ENCODE measurements at regions of chr6 and their contacts with region 1.

Region 1: GRCh38 chr6:33711140-33712129 is at the start of gene UQCC2:
- DNase-seq: peak; percentile 96 to 100
- ATAC-seq: peak; percentile 96 to 97 (median 97)
- H3K4me3 ChIP-seq: peak within 1 kb of the TSS; percentile 99
- H3K4me3 Mint-ChIP-seq: peak within 1 kb of the TSS; percentile 98
- H3K27ac ChIP-seq: peak within 1 kb of the TSS; percentile 94
- H3K27ac Mint-ChIP-seq: peak within 1 kb of the TSS; percentile 95 to 100
- H3K4me1 ChIP-seq: peaks cover 18% of the 10 kb centered on the region
- H3K4me1 Mint-ChIP-seq: peaks cover 21 to 22% of the 10 kb centered on the region in 2 donors
- H3K27me3 ChIP-seq: no peaks in the 10 kb centered on the region
- H3K27me3 Mint-ChIP-seq: peaks cover 0 to 2% of the 10 kb centered on the region in 2 donors
- CTCF ChIP-seq: peak; percentile 65
- total RNA-seq, gene UQCC2: 15.8 to 19.6 (median 16.5) TPM

Region 2: GRCh38 chr6:33642897-33643296 is 68.5 kb before region 1 on chr6:
- intact Hi-C with region 1: no loop called
- DNase-seq: no peak
- ATAC-seq: no peak
- H3K4me3 ChIP-seq: no peak overlapping the region
- H3K4me3 Mint-ChIP-seq: no peak overlapping the region
- H3K27ac ChIP-seq: no peak overlapping the region
- H3K27ac Mint-ChIP-seq: peak overlapping the region in 1 of 2 donors; percentile 60
- H3K4me1 ChIP-seq: peaks cover 13% of the 10 kb centered on the region
- H3K4me1 Mint-ChIP-seq: peaks cover 33 to 63% of the 10 kb centered on the region in 2 donors
- H3K27me3 ChIP-seq: no peaks in the 10 kb centered on the region
- H3K27me3 Mint-ChIP-seq: no peaks in the 10 kb centered on the region
- CTCF ChIP-seq: no peak

Region 3: DNA sequence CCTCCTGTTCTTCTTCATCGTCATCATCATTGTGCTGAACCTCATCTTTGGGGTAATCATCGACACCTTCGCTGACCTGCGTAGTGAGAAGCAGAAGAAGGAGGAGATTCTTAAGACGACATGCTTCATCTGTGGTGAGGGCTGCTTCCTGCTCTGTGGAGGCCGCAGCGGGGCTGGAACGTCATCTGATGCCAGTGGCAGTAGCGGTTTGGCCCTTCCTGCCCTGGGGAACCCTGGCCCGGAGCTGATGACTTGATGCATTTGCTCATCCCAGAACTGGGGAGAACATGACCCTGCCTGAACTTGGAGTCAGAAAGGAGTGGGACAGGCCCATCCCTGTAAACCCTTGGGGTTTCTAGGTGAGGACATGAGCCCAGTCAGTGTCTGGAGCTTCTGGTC is 18.7 kb before region 1 on chr6:
- intact Hi-C with region 1: loop called (anchors 1 kb)
- DNase-seq: peak; percentile 69 to 83
- ATAC-seq: peak; percentile 80 to 87 (median 80)
- H3K4me3 ChIP-seq: no peak overlapping the region
- H3K4me3 Mint-ChIP-seq: peak overlapping the region; percentile 70
- H3K27ac ChIP-seq: peak overlapping the region; percentile 83
- H3K27ac Mint-ChIP-seq: peak overlapping the region; percentile 96 to 98
- H3K4me1 ChIP-seq: peaks cover 59% of the 10 kb centered on the region
- H3K4me1 Mint-ChIP-seq: peaks cover 27 to 31% of the 10 kb centered on the region in 2 donors
- H3K27me3 ChIP-seq: no peaks in the 10 kb centered on the region
- H3K27me3 Mint-ChIP-seq: no peaks in the 10 kb centered on the region
- CTCF ChIP-seq: no peak

Region 4: DNA sequence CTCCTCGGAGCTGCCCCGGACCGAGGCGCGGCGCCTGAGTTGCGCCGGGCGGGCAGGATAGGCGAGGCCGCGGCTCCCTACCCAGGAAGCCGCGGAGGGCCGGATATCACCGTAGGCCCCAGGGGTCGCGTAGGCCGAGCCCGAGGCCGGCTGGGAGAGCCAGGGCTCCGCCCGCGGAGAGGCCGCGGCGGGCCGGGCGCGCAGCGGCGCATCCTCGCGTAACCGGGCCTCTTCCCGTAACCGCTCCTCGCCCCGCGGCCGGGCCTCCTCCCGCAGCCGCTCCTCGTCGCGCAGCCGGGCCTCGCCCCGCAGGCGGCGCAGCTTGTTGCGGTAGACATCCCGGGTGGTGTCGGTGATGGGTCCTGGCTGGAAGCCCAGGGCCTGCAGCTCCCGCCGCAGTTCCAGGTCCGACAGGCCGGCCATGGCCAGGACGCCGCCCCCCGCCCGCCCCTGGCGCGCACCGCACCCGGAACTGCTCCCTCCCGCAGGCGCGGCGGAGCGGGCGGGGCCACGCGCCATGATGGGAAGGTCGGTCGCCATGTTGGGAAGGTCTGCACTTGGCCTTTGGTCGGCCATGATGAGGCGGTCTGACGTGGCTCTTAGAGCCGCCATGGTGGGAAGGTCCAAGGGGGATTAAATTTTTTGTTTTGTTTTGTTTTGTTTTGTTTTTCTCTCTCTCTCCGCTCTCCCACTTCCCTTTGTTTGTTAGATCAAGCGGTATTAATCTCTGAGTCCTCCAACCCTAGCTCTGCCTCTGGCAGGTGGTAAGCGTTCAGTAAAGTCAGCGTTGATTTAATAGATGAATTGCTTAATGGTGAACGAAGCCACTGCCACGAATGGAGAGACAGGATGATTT is 77.5 kb after region 1 on chr6 and contains the start of gene LEMD2:
- intact Hi-C with region 1: loop called (anchors 1 kb)
- DNase-seq: peak; percentile 95
- ATAC-seq: peak; percentile 87 to 95 (median 91)
- H3K4me3 ChIP-seq: peak within 1 kb of the TSS; percentile 49
- H3K4me3 Mint-ChIP-seq: peak within 1 kb of the TSS; percentile 98
- H3K27ac ChIP-seq: peak within 1 kb of the TSS; percentile 64
- H3K27ac Mint-ChIP-seq: peak within 1 kb of the TSS; percentile 90 to 96
- H3K4me1 ChIP-seq: peaks cover 35% of the 10 kb centered on the region
- H3K4me1 Mint-ChIP-seq: peaks cover 49 to 50% of the 10 kb centered on the region in 2 donors
- H3K27me3 ChIP-seq: no peaks in the 10 kb centered on the region
- H3K27me3 Mint-ChIP-seq: peaks cover 3 to 17% of the 10 kb centered on the region in 2 donors
- CTCF ChIP-seq: no peak
- total RNA-seq, gene LEMD2: 109 to 133 (median 121) TPM

Region 5: GRCh38 chr6:34082864-34083626 is 371.6 kb after region 1 on chr6:
- intact Hi-C with region 1: no loop called
- DNase-seq: no peak
- ATAC-seq: no peak
- H3K4me3 ChIP-seq: no peak overlapping the region
- H3K4me3 Mint-ChIP-seq: no peak overlapping the region
- H3K27ac ChIP-seq: no peak overlapping the region
- H3K27ac Mint-ChIP-seq: no peak overlapping the region
- H3K4me1 ChIP-seq: peaks cover 7% of the 10 kb centered on the region
- H3K4me1 Mint-ChIP-seq: no peaks in the 10 kb centered on the region
- H3K27me3 ChIP-seq: no peaks in the 10 kb centered on the region
- H3K27me3 Mint-ChIP-seq: peaks cover 0 to 3% of the 10 kb centered on the region in 2 donors
- CTCF ChIP-seq: no peak